Spleen (tissue), 13 donors: ENCODE measurements at regions of chr18 and their contacts with region 1.

Region 1: GRCh38 chr18:32707147-32707546 is 65.7 kb downstream of the KLHL14 start:
- DNase-seq: no peak
- H3K4me3 ChIP-seq: no peak overlapping the region
- H3K27ac ChIP-seq: no peak overlapping the region
- H3K4me1 ChIP-seq: peaks cover 0 to 3% (median 0%) of the 10 kb centered on the region in 6 donors
- H3K27me3 ChIP-seq: no peaks in the 10 kb centered on the region
- CTCF ChIP-seq: no peak
- POLR2A ChIP-seq: no peak

Region 2: DNA sequence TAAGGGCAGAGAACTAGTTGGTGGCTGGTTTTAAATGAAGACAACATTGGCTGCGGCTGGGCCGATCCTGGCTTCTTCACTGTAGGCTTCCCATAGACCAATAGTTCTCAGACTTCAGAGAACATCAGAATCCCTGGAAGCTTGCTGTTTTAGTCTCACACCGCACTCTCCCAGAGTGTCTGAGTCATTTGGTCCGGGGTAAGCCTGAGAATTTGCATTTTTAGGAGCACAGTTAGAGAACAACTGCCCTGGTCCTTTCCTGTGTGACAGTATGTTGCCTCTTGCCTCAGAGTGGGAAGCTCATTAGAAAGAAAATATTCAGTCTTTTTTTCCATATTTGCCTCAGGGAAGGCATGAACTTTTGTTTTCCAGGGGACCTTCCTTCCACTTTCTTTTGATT is 99.3 kb before region 1 on chr18:
- intact Hi-C with region 1: no loop called
- DNase-seq: no peak
- H3K4me3 ChIP-seq: no peak overlapping the region
- H3K27ac ChIP-seq: no peak overlapping the region
- H3K4me1 ChIP-seq: no peaks in the 10 kb centered on the region
- H3K27me3 ChIP-seq: no peaks in the 10 kb centered on the region
- CTCF ChIP-seq: no peak
- POLR2A ChIP-seq: no peak

Region 3: DNA sequence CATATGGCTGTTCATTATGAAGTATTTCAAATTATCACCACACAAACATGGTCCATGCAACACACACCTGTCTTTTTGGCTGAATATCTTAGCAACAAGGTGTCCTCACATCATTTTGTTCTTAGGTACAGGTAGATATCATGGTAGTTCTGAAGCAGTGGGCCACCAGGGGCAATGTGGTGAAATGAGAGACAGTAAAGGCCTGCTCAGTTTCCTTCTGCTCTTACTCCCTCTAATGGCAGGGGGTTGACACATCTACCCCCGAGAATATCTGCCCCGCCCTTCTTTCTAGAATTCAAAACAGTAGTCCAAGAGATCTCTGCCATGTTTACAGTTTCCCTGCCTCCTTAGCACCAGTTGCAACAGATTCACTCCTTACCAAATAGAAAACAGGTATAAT is 212.7 kb after region 1 on chr18:
- intact Hi-C with region 1: loop called (anchors 10 kb)
- DNase-seq: no peak
- H3K4me3 ChIP-seq: no peak overlapping the region
- H3K27ac ChIP-seq: no peak overlapping the region
- H3K4me1 ChIP-seq: peaks cover 0 to 28% (median 7%) of the 10 kb centered on the region in 6 donors
- H3K27me3 ChIP-seq: no peaks in the 10 kb centered on the region
- CTCF ChIP-seq: peak; percentile 25 to 81 (median 62)
- POLR2A ChIP-seq: no peak